Aorta (tissue), 5 donors: ENCODE measurements at regions of chr1 and their contacts with region 1.

Region 1: DNA sequence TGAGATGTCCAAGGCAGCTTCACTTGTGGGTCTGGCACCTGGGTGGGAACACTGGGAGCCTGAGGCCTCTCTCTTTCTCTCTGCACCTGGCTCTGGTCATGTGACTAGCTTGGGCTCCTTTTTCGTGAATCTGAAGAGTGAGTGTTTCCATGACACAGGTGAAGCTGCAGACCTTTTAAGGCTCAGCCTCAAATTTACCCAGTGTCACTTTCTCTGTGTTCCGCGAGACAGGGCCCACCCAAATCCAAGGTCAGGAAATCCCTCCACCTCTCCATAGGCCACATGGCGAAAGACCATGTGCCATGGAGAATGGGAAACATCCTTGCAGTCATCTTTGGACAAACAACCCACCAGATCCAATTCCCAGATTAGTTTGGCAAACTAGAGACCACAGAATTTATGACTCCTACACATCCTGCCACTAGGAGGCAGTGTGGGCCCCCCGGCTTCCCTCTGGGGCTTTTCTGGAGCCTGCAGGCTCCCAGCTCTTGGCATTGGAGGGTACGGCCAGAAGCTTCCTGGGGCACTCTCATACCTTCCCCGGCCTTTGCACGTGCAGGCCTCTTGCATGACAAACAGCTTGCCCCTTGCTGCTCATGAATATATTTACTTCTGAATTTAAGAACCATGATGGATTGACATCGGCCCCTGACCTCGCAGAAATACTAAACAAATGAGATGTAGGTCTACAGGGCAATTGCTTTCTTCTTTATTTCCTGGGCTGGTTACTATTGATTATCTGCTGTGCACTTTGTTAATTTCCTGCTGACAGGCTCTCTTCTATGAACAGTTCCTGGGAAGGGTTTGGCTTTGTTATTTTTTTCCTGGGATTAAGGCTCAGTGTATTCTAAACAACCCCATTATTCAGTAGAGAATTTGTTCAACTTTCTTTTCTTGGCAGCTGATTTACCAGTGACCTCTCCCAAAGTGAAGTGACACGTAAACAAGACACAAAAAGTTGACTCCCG is 180.7 kb downstream of the KAZN start:
- DNase-seq: peak in 1 of 2 donors; percentile 55
- ATAC-seq: no peak
- H3K4me3 ChIP-seq: no peak overlapping the region
- H3K27ac ChIP-seq: no peak overlapping the region
- H3K4me1 ChIP-seq: no peaks in the 10 kb centered on the region
- H3K27me3 ChIP-seq: no peaks in the 10 kb centered on the region

Region 2: GRCh38 chr1:15028102-15028501 is 248.9 kb after region 1 on chr1:
- intact Hi-C with region 1: loop called in 1 of 2 experiments (anchors 1 kb)
- DNase-seq: peak; percentile 89
- ATAC-seq: peak; percentile 73
- H3K4me3 ChIP-seq: no peak overlapping the region
- H3K27ac ChIP-seq: peak overlapping the region in 1 of 2 donors; percentile 52
- H3K4me1 ChIP-seq: no peaks in the 10 kb centered on the region
- H3K27me3 ChIP-seq: no peaks in the 10 kb centered on the region

Region 3: GRCh38 chr1:15046487-15047165 is 267.4 kb after region 1 on chr1:
- intact Hi-C with region 1: loop called (anchors 1 to 5 kb)
- DNase-seq: peak; percentile 77 to 85
- ATAC-seq: peak; percentile 80
- H3K4me3 ChIP-seq: no peak overlapping the region
- H3K27ac ChIP-seq: no peak overlapping the region
- H3K4me1 ChIP-seq: no peaks in the 10 kb centered on the region
- H3K27me3 ChIP-seq: no peaks in the 10 kb centered on the region

Region 4: GRCh38 chr1:15100121-15100874 is 321.1 kb after region 1 on chr1:
- intact Hi-C with region 1: loop called in 1 of 2 experiments (anchors 5 kb)
- DNase-seq: peak in 1 of 2 donors; percentile 77
- ATAC-seq: peak; percentile 55
- H3K4me3 ChIP-seq: no peak overlapping the region
- H3K27ac ChIP-seq: no peak overlapping the region
- H3K4me1 ChIP-seq: no peaks in the 10 kb centered on the region
- H3K27me3 ChIP-seq: no peaks in the 10 kb centered on the region